Naive thymus-derived CD4-positive, alpha-beta T cell (primary cell): ENCODE measurements at regions of chr3 and their contacts with region 1.

Region 1: DNA sequence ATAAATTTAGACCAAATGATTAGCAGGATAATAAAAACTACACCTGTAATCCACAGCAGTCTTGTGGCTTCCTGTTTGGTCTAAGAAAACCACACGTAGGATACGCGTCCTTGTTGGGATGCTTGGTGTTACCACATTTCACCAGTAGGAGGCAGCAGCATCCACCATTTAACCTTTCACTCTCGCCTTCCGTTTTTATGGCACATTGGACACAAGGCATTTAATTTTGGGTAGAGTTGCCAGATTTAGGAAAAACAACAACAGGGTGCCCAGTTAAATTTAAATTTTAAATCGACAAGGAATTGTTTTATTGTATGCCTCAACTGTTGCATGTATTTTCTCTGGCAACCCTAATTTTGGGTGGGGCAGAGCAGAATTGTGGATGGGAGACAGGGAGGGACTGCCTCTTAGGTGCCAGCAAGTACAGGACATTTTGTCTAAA is 6.3 kb downstream of the LRRC31 start:
- DNase-seq: peak; percentile 29 to 77 (median 67)
- ATAC-seq: peak; percentile 87
- H3K4me3 ChIP-seq: no peak overlapping the region
- H3K4me3 Mint-ChIP-seq: peak overlapping the region in 4 of 10 donors; percentile 3 to 58 (median 38)
- H3K27ac ChIP-seq: no peak overlapping the region
- H3K27ac Mint-ChIP-seq: peak overlapping the region in 6 of 9 donors; percentile 42 to 98 (median 52)
- H3K4me1 ChIP-seq: peaks cover 6 to 22% of the 10 kb centered on the region in 2 donors
- H3K4me1 Mint-ChIP-seq: peaks cover 19 to 38% (median 27%) of the 10 kb centered on the region in 7 donors
- H3K27me3 ChIP-seq: no peaks in the 10 kb centered on the region
- H3K27me3 Mint-ChIP-seq: peaks cover 0 to 14% (median 0%) of the 10 kb centered on the region in 5 donors

Region 2: DNA sequence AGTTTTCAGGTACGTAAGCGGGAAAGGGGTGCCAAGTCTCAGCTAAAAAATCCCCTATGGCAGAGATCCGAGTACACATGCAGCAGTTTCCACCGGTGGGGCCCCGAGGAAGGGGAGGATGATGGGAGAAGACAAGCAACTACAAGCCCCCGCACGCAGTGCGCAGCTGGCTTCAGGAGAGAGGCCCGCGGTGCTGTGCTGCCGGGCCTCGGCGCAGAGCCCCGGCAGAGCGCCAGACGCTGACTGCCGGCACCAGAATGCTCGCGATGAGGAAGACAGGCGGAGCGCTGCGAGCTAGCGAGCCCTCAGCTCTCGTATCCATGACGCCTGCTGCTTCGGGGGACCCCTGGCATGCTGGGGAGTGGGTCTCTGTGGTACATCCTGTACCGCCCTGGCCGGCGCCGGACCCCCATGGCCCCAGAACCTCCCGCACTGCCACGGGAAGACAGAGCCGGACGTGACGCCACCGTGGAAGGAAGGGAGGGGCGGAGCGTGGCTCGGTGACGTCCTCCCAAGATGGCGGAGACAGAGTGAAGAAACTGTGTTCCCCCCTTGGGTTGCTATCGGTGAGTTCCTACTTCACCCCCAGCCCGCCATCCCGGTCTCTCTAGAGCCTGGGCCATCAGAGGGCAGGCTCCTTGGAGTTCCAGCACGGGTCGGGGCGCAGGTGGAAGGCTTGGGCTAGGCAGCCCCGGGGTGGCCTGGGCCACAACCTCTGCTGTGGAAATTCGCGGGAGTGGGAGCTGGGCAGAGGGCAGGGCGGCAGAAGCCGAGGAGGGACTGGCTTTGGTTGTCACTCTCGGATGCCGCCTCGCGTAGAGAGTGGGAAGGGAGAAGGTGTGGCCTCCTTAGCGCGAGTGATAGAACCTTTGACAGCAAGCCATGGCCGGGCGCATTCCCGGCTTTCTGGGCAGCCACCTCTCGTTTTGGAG is 90.3 kb before region 1 on chr3 and contains the start of gene MYNN:
- CTCF ChIA-PET with region 1: interaction called, 6 read pairs
- POLR2A ChIA-PET with region 1: interaction called, 3 read pairs
- intact Hi-C with region 1: loop called in 1 of 2 experiments (anchors 1 kb)
- DNase-seq: peak; percentile 87 to 95 (median 93)
- ATAC-seq: peak; percentile 90
- H3K4me3 ChIP-seq: peak within 1 kb of the TSS; percentile 87
- H3K4me3 Mint-ChIP-seq: peak within 1 kb of the TSS; percentile 91 to 99 (median 97)
- H3K27ac ChIP-seq: peak within 1 kb of the TSS; percentile 100
- H3K27ac Mint-ChIP-seq: peak within 1 kb of the TSS; percentile 96 to 100 (median 99)
- H3K4me1 ChIP-seq: peaks cover 15 to 22% of the 10 kb centered on the region in 2 donors
- H3K4me1 Mint-ChIP-seq: peaks cover 18 to 69% (median 56%) of the 10 kb centered on the region in 7 donors
- H3K27me3 ChIP-seq: no peaks in the 10 kb centered on the region
- H3K27me3 Mint-ChIP-seq: peaks cover 0 to 5% (median 0%) of the 10 kb centered on the region in 5 donors
- total RNA-seq, gene MYNN: 16.2 to 20.8 (median 19.0) TPM

Region 3: GRCh38 chr3:169966428-169966950 is 103.0 kb after region 1 on chr3 and contains the start of gene SEC62:
- CTCF ChIA-PET with region 1: interaction called, 16 read pairs
- POLR2A ChIA-PET with region 1: interaction called, 55 read pairs
- intact Hi-C with region 1: loop called (anchors 1 kb)
- DNase-seq: peak; percentile 92 to 97 (median 96)
- ATAC-seq: peak; percentile 95
- H3K4me3 ChIP-seq: peak within 1 kb of the TSS; percentile 80
- H3K4me3 Mint-ChIP-seq: peak within 1 kb of the TSS; percentile 83 to 98 (median 96)
- H3K27ac ChIP-seq: peak within 1 kb of the TSS; percentile 95
- H3K27ac Mint-ChIP-seq: peak within 1 kb of the TSS; percentile 95 to 99 (median 99)
- H3K4me1 ChIP-seq: peaks cover 22 to 36% of the 10 kb centered on the region in 2 donors
- H3K4me1 Mint-ChIP-seq: peaks cover 37 to 81% (median 69%) of the 10 kb centered on the region in 7 donors
- H3K27me3 ChIP-seq: no peaks in the 10 kb centered on the region
- H3K27me3 Mint-ChIP-seq: peaks cover 0 to 2% (median 0%) of the 10 kb centered on the region in 5 donors
- total RNA-seq, gene SEC62: 75.2 to 156 (median 110) TPM

Region 4: DNA sequence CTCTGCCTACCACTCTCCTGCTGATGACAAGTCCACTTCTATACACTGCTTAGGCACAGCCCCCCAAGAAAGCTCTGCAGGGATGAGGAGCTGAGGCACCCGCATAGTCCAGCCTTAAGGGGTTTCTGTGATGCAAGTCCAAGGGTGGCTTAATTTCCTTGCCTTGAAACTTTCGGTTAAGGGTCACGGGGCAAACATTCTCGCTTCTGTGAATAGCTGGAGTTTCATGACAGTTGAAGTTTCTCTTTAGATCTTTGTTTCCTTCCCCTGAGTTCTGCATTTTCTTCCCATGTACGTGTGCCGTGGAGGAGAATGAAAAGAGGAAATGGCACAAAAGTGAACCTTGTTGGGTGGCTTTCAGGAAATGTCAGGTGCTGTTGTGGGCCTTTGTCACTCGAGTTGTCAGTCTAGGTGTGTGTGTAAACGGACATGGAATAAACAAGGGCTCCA is 181.3 kb after region 1 on chr3:
- CTCF ChIA-PET with region 1: interaction called, 10 read pairs
- POLR2A ChIA-PET with region 1: interaction called, 8 read pairs
- intact Hi-C with region 1: no loop called
- DNase-seq: no peak
- ATAC-seq: peak; percentile 60
- H3K4me3 ChIP-seq: no peak overlapping the region
- H3K4me3 Mint-ChIP-seq: peak overlapping the region; percentile 12 to 78 (median 64)
- H3K27ac ChIP-seq: peak overlapping the region; percentile 24
- H3K27ac Mint-ChIP-seq: peak overlapping the region; percentile 30 to 94 (median 84)
- H3K4me1 ChIP-seq: peaks cover 0 to 19% of the 10 kb centered on the region in 2 donors
- H3K4me1 Mint-ChIP-seq: peaks cover 16 to 58% (median 35%) of the 10 kb centered on the region in 7 donors
- H3K27me3 ChIP-seq: no peaks in the 10 kb centered on the region
- H3K27me3 Mint-ChIP-seq: peaks cover 0 to 2% (median 0%) of the 10 kb centered on the region in 5 donors

Region 5: DNA sequence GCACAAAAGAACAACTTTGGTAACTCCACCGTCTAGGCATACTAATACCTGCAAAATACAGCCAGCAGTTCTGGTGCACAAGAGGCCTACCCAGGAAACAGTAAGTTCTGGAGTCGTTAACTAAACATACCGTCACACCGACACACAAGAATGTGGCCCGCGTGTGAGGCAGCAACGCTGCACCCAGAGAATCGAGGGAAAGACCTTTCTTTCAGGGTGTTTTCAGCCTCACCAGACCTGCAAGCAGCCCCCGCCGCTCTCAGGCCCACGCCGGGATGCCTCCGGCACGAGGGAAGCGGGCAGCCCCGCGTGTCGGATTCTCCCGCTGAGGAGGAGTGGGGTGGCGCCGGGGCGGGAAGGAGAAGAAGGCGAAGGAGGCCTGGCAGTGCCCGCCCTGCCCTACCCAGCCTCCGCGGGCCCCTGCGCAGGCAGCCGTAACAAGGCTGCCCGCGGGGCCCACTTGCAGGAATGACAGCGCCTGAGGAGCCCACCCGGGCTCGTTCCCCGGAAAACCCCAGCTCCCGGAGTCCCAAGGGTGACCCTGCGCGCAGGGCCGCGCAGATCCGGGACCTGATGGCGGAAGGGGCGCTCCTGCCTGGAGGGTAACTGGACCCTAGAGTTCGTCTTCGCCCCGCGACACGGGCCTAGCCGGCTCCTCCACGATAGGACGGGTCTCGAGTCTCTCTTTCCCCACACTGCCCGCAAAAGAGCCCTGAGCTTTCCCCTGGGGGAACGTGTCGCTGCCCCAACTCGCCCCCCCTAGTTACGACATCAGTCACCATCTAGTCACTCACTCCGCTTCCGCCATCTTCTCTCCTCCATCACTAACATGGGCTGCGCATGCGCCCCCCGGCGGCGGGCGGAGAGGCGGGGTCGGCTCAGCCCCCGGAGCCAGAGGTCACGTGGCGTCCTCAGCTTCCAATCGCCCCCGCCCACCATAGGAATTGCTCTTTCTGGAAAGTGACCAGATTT is 317.7 kb after region 1 on chr3 and contains the start of gene PHC3:
- CTCF ChIA-PET with region 1: no interaction called
- POLR2A ChIA-PET with region 1: interaction called, 5 read pairs
- intact Hi-C with region 1: loop called in 1 of 2 experiments (anchors 2 kb)
- DNase-seq: peak; percentile 88 to 95 (median 92)
- ATAC-seq: peak; percentile 86
- H3K4me3 ChIP-seq: peak within 1 kb of the TSS; percentile 93
- H3K4me3 Mint-ChIP-seq: peak within 1 kb of the TSS; percentile 88 to 100 (median 99)
- H3K27ac ChIP-seq: peak within 1 kb of the TSS; percentile 98
- H3K27ac Mint-ChIP-seq: peak within 1 kb of the TSS; percentile 96 to 100 (median 100)
- H3K4me1 ChIP-seq: peaks cover 19 to 39% of the 10 kb centered on the region in 2 donors
- H3K4me1 Mint-ChIP-seq: peaks cover 19 to 40% (median 33%) of the 10 kb centered on the region in 7 donors
- H3K27me3 ChIP-seq: no peaks in the 10 kb centered on the region
- H3K27me3 Mint-ChIP-seq: peaks cover 0 to 2% (median 0%) of the 10 kb centered on the region in 5 donors
- total RNA-seq, gene PHC3: 78.9 to 215 (median 158) TPM

Region 6: GRCh38 chr3:170811928-170812591 is 948.6 kb after region 1 on chr3:
- CTCF ChIA-PET with region 1: no interaction called
- POLR2A ChIA-PET with region 1: no interaction called
- intact Hi-C with region 1: loop called in 1 of 2 experiments (anchors 5 kb)
- DNase-seq: peak; percentile 17 to 77 (median 68)
- ATAC-seq: peak; percentile 92
- H3K4me3 ChIP-seq: no peak overlapping the region
- H3K4me3 Mint-ChIP-seq: no peak overlapping the region
- H3K27ac ChIP-seq: no peak overlapping the region
- H3K27ac Mint-ChIP-seq: no peak overlapping the region
- H3K4me1 ChIP-seq: no peaks in the 10 kb centered on the region
- H3K4me1 Mint-ChIP-seq: peaks cover 0 to 8% (median 0%) of the 10 kb centered on the region in 7 donors
- H3K27me3 ChIP-seq: no peaks in the 10 kb centered on the region
- H3K27me3 Mint-ChIP-seq: peaks cover 0 to 6% (median 0%) of the 10 kb centered on the region in 5 donors

Region 7: GRCh38 chr3:171829841-171830517 is 1966.5 kb after region 1 on chr3:
- CTCF ChIA-PET with region 1: no interaction called
- POLR2A ChIA-PET with region 1: no interaction called
- intact Hi-C with region 1: no loop called
- DNase-seq: no peak
- ATAC-seq: peak; percentile 50
- H3K4me3 ChIP-seq: no peak overlapping the region
- H3K4me3 Mint-ChIP-seq: no peak overlapping the region
- H3K27ac ChIP-seq: no peak overlapping the region
- H3K27ac Mint-ChIP-seq: no peak overlapping the region
- H3K4me1 ChIP-seq: no peaks in the 10 kb centered on the region
- H3K4me1 Mint-ChIP-seq: peaks cover 0 to 10% (median 5%) of the 10 kb centered on the region in 7 donors
- H3K27me3 ChIP-seq: no peaks in the 10 kb centered on the region
- H3K27me3 Mint-ChIP-seq: peaks cover 3 to 47% (median 9%) of the 10 kb centered on the region in 5 donors